Right ventricle myocardium superior (tissue), 1 donor: ENCODE measurements at regions of chr15 and their contacts with region 1.

Region 1: GRCh38 chr15:66700802-66701421 is 1.1 kb upstream of the SMAD6 start:
- DNase-seq: peak; percentile 97
- ATAC-seq: peak; percentile 83

Region 2: DNA sequence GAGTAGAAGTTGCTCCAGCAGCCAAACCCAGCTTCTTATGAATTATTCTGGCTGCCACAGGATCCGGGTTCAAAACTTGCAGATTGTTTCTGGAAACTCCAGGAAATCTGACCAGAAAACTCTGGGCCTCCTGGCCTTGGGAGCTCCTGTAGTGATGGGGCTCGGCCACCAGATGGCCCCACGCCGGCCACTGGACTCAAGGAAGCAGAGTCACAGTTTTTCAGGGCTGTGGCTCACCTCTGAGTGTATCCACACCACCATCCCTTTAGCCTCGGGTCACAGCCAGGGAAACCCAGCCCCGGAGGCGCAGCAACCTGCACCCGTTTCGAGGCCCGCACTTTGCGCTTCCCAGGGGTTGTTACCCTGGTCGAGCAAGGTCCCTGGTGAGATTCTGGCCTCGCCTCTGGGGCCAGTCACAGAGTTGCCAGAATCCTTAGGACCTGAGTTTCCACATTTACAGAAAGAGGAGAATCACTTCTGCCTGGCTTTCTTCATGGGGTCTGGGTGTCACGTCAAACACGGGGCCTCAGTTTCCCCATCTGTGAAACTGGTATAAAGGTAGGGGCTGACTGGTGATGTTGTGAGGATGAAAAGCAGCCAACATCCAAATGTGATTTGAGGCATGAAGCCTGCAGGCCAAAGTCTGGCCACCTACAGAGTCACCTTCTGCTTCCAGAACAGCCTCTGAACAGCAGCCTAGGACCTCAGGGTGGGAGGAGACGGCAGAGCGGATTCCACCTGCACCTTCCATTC is 81.6 kb before region 1 on chr15:
- intact Hi-C with region 1: loop called (anchors 2 kb)
- DNase-seq: peak; percentile 89
- ATAC-seq: peak; percentile 84

Region 3: GRCh38 chr15:66650434-66650833 is 50.5 kb before region 1 on chr15:
- intact Hi-C with region 1: no loop called
- DNase-seq: peak; percentile 71
- ATAC-seq: peak; percentile 39

Region 4: DNA sequence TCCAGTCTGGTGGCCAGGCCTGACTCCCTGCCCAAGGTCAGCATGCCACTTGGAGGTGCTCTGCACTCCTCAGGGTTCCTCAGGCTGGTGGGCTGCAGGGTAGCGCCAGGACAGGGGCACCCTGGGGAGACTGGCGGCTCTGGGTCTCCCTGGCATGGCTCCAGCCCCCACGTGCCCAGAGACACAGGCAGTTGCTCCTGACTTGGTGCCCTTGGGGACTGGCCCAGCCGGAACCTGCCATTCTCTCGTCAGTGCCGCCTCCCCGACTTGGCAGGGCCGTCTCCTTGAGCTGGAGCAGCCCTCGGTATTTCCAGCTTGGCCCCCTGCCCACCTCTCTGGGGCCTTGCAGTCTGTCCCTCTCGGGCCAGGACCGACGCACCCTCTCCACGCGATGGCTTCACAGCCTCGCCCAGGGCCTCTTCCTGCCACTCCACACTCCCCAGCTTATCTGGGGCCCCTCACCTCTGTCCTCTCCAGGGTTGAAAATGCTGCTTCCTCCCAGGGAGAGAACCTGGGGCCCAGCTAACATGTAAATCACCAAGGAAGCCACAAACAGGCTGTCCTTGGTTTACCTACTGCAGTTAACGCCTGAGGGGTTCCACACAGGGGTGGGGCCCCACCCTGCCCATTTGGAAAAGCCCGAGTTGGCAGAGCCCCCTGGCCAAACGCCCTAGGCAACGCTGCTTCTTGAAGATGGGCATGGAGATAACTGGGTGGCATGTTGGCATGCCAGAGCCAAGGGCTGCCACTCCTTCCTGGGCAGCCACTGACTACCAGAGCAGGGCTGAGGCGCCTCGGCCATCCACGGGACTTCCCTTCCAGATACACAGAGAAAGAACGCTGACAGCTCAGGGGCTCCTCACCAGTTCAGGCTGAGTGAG is 62.5 kb after region 1 on chr15:
- intact Hi-C with region 1: loop called (anchors 5 kb)
- DNase-seq: peak; percentile 95
- ATAC-seq: peak; percentile 95

Region 5: DNA sequence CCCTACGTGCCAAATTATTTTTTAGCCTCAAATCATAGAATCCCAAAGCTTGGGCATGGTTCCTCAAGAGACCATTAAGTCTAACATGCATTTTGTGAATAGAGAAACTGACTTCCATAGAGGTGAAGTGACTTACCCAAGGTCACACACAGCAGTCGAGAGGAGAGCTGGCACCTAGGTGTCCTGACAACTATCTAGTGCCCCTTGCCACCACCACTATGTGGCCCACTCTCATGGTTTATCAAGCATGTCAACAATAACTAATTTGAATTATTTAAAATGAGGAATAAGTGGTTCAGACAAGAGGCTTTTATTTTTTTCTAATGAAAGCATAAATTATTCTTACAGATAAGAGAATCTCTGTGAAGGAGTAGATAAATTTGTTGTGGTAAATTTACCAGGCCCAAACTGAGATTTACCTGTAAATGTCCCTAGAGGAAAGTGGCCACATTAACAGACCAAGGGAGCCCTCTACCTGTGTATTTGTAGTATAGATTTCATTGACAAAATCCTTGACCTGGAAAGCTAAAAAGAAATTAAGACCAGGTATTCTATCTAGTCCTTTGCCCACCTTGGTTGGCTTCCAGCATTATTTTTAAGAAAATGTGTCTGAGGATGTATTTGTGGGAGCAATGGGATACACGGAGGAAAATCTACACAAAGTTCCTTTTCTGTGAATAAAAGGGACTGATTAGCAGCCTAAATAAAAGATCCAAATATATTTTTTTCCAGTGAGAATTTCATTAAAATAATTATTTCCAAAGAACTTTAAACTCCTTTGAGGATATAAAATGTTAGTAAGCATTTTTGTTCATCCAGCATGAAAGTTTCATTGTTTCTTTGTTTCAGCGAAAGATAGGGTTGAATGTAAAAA is 602.8 kb after region 1 on chr15:
- intact Hi-C with region 1: no loop called
- DNase-seq: no peak
- ATAC-seq: no peak